HCT116 (cell line): ENCODE measurements at regions of chr6 and their contacts with region 1.

Region 1: GRCh38 chr6:134097114-134097707 is 44.8 kb upstream of the SLC2A12 start:
- DNase-seq: peak; percentile 67
- ATAC-seq: peak; percentile 78
- H3K4me3 ChIP-seq: no peak overlapping the region
- H3K27ac ChIP-seq: no peak overlapping the region
- H3K4me1 ChIP-seq: no peaks in the 10 kb centered on the region
- H3K27me3 ChIP-seq: no peaks in the 10 kb centered on the region
- CTCF ChIP-seq: peak; percentile 47 to 95 (median 76); a peak in 5 of 6 replicates
- POLR2A ChIP-seq: no peak
- RAD21 ChIP-seq: peak; percentile 95

Region 2: GRCh38 chr6:133184798-133185372 is 912.3 kb before region 1 on chr6:
- CTCF ChIA-PET with region 1: no interaction called
- POLR2A ChIA-PET with region 1: no interaction called
- RAD21 ChIA-PET with region 1: no interaction called
- intact Hi-C with region 1: loop called (anchors 10 kb)
- DNase-seq: no peak
- ATAC-seq: peak; percentile 57; the same call in 1 of the 2 replicates
- H3K4me3 ChIP-seq: no peak overlapping the region
- H3K27ac ChIP-seq: no peak overlapping the region
- H3K4me1 ChIP-seq: no peaks in the 10 kb centered on the region
- H3K27me3 ChIP-seq: peaks cover 21% of the 10 kb centered on the region
- CTCF ChIP-seq: peak; percentile 38 to 69 (median 50); a peak in 5 of 6 replicates
- POLR2A ChIP-seq: no peak
- RAD21 ChIP-seq: peak; percentile 58

Region 3: DNA sequence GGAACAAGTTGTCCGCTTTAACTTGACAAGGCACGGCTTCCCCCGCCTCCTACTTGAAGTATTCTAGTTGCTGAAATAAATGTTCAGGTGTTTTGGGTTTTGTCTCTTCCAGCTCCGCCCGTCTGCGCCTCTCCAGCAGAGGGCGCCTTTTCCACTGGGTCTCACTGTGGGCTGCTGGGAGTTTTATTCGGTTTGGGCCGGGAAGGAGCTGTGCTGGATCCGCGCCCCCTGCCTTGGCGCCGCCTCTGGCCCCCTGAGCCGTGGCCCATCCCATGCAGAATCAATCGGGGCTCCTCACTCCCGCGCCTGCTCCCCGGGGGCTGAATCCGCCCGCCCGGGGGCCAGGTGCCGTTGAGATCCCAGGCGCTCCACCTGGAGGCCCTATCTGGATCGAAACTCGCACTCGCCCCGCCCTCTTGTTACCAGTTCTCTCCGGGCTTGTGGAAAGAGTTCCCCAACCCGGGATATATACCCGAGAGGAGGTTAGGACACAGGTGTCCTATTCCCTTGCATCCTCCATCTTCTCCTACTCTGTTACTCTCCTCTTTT is 259.3 kb before region 1 on chr6:
- CTCF ChIA-PET with region 1: interaction called, 12 read pairs
- POLR2A ChIA-PET with region 1: no interaction called
- RAD21 ChIA-PET with region 1: interaction called in 1 of 2 experiments, 3 read pairs
- intact Hi-C with region 1: loop called (anchors 5 kb)
- DNase-seq: peak; percentile 68
- ATAC-seq: peak; percentile 95
- H3K4me3 ChIP-seq: peak overlapping the region; percentile 40 to 59
- H3K27ac ChIP-seq: peak overlapping the region; percentile 60
- H3K4me1 ChIP-seq: peaks cover 0 to 10% of the 10 kb centered on the region in 2 experiments; a peak in 2 of 4 replicates
- H3K27me3 ChIP-seq: no peaks in the 10 kb centered on the region
- CTCF ChIP-seq: peak; percentile 95 to 97 (median 97)
- POLR2A ChIP-seq: no peak
- RAD21 ChIP-seq: peak; percentile 71

Region 4: DNA sequence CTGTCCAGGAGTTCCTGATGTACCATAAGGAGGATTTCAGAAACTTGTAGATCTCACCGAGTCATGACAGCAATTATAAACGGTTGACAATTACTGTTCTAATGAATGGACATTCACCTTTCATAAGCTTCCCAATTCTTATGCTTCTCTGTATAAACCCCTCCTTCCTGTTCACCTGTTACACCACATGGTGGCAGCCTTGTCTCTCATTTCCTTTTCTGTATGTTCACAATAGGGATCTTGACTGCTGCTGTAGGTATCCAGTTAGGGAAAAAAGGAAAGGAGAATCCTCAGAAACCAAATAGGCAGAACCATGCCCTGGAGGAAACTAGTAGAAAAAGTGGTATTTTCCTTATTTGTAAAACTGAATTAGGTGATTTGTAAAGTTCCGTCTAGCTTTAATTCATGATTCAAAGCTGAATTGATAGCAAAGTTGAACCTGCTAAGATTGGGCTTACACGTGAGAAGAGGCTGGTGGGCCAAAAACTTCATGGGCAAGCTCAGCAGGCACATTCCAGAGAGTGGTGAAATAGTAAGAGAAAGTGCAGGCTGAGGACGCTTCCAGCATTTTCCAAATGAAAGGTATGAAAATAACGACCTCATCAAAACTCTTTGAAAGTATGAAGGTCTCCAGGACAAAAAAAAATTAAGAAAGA is 173.1 kb before region 1 on chr6:
- CTCF ChIA-PET with region 1: interaction called, 510 read pairs
- POLR2A ChIA-PET with region 1: interaction called, 23 read pairs
- RAD21 ChIA-PET with region 1: interaction called, 46 to 92 read pairs
- intact Hi-C with region 1: loop called (anchors 1 kb)
- DNase-seq: peak; percentile 78
- ATAC-seq: peak; percentile 92
- H3K4me3 ChIP-seq: no peak overlapping the region
- H3K27ac ChIP-seq: no peak overlapping the region
- H3K4me1 ChIP-seq: peaks cover 3 to 5% of the 10 kb centered on the region in 2 experiments; a peak in 1 of 4 replicates
- H3K27me3 ChIP-seq: no peaks in the 10 kb centered on the region
- CTCF ChIP-seq: peak; percentile 69 to 92 (median 88)
- POLR2A ChIP-seq: no peak
- RAD21 ChIP-seq: peak; percentile 98

Region 5: GRCh38 chr6:133973109-133973971 is 123.9 kb before region 1 on chr6:
- CTCF ChIA-PET with region 1: interaction called, 31 read pairs
- POLR2A ChIA-PET with region 1: no interaction called
- RAD21 ChIA-PET with region 1: interaction called, 4 read pairs
- intact Hi-C with region 1: loop called (anchors 1 kb)
- DNase-seq: peak; percentile 44
- ATAC-seq: 0 out of 2 replicates have a peak, but pooled peaks have one; percentile 40
- H3K4me3 ChIP-seq: no peak overlapping the region
- H3K27ac ChIP-seq: no peak overlapping the region
- H3K4me1 ChIP-seq: peaks cover under 1 to 17% of the 10 kb centered on the region in 2 experiments
- H3K27me3 ChIP-seq: no peaks in the 10 kb centered on the region
- CTCF ChIP-seq: peak; percentile 54 to 85 (median 81)
- POLR2A ChIP-seq: no peak
- RAD21 ChIP-seq: peak; percentile 86